Gastrocnemius medialis (tissue), 4 donors: ENCODE measurements at regions of chr16 and their contacts with region 1.

Region 1: DNA sequence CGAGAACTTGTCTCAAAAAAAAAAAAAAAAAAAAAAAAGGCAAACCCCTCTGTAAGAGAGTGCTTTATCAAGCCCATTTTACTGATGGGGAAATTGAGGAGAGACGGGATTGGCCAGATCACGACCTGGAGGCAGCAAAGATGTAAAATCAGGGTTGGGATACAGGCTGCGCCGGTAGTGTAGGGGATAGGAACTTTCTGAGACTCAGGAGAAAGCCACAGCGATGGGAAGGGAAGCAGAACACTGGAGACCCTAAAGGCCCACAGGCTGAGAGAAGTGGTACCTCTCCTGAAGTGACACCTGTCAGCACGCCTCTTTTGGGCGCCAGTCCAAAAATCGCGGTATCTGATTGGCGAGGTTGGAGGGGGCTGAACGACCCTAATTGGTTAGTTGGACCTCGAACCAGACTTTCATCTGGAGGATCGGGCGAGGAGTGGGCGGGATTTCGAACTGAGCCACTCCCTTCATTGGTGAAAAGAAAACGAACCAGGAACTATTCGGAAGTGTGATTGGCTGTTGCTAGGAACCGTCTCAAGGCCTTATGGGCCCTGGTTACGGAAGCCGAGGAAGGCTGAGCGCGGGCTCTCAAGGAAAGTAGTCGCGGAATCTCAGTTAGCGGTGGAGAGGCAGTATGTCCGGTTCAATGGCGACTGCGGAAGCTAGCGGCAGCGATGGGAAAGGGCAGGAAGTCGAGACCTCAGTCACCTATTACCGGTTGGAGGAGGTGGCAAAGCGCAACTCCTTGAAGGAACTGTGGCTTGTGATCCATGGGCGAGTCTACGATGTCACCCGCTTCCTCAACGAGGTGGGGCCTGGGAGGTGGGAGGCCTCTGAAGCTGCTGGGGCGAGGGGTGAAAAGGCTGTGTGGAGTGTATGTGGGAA is at the start of gene CYB5B:
- DNase-seq: peak; percentile 93 to 96
- ATAC-seq: peak; percentile 100
- H3K4me3 ChIP-seq: peak within 1 kb of the TSS; percentile 70 to 90 (median 79)
- H3K27ac ChIP-seq: peak within 1 kb of the TSS; percentile 76 to 88 (median 80)
- H3K4me1 ChIP-seq: peaks cover 10 to 12% of the 10 kb centered on the region in 2 donors
- H3K27me3 ChIP-seq: no peaks in the 10 kb centered on the region
- CTCF ChIP-seq: peak in 1 of 5 experiments; percentile 19
- POLR2A ChIP-seq: peak; percentile 62 to 64
- total RNA-seq, gene CYB5B: 18.5 to 50.1 (median 26.3) TPM

Region 2: GRCh38 chr16:69371564-69371963 is 52.7 kb before region 1 on chr16:
- in situ Hi-C with region 1: no loop called
- intact Hi-C with region 1: no loop called
- DNase-seq: no peak
- ATAC-seq: no peak
- H3K4me3 ChIP-seq: no peak overlapping the region
- H3K27ac ChIP-seq: no peak overlapping the region
- H3K4me1 ChIP-seq: no peaks in the 10 kb centered on the region
- H3K27me3 ChIP-seq: no peaks in the 10 kb centered on the region
- CTCF ChIP-seq: no peak
- POLR2A ChIP-seq: no peak

Region 3: DNA sequence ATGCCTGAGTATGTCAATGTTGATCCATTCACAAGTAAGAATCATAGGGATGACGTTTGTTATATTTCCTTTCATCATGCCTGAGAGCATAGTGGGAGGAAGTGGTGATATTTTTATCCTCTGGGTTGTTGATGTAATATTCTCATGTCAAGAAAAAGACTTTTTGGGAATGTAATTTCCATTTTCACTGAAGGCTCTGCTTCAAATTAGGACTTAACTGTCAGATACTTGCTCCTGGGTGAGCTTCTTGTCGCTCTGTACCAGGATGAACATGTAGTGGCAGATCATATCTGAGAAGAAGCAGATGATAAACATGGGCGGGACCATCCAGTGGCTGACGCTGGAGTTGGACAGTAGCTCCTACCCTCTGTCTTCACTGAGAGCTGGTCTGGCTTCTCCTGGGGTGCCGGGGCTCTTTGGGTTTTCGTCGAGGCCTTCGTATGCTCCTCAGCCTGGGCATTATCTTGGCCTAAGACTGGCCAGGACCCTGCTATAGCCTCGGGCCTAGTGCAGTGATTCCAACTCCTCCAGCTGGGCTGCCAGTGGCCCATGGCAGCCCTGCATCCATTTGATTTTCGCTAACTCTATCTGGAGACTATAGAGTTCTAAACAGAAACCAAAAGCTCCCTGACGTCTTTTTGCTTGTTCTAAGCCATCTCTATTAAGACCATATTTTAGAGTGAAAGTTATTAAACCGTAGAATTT is 19.8 kb after region 1 on chr16:
- in situ Hi-C with region 1: no loop called
- intact Hi-C with region 1: loop called (anchors 2 kb)
- DNase-seq: no peak
- ATAC-seq: peak; percentile 38 to 81
- H3K4me3 ChIP-seq: peak overlapping the region; percentile 35 to 44 (median 41)
- H3K27ac ChIP-seq: peak overlapping the region; percentile 70 to 81 (median 76)
- H3K4me1 ChIP-seq: peaks cover 33 to 39% of the 10 kb centered on the region in 2 donors
- H3K27me3 ChIP-seq: no peaks in the 10 kb centered on the region
- CTCF ChIP-seq: no peak
- POLR2A ChIP-seq: no peak

Region 4: DNA sequence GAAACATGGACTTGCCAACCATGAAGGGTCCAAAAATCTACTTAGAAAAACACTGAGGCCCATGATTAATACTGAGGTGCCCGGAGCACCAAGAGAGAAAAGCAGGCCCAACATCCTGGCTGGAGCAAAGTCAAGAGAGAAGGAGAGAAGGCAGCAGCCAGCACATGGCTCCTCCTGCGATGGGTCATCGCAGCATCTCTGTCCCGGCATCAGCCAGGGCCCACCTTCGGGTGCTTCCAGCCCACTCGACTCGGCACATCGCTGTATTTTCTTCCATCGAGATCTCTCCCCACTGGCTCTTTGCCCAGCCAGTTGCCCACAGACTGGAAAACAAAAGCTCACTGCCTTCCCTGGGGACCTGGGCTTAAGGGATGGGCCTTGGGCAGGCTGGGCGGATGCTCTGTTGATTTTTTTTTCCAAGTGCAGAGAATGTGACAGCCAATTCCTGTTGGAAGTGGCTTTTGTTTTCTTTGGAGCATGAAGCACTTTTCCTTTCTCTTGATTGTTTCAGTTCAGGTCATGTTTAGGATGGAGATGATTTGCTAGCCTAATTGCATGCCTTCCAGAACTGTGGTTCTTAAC is 58.2 kb after region 1 on chr16:
- in situ Hi-C with region 1: no loop called
- intact Hi-C with region 1: loop called (anchors 1 kb)
- DNase-seq: peak; percentile 20 to 40
- ATAC-seq: peak; percentile 62 to 77
- H3K4me3 ChIP-seq: peak overlapping the region; percentile 19 to 44 (median 37)
- H3K27ac ChIP-seq: peak overlapping the region; percentile 76 to 89 (median 84)
- H3K4me1 ChIP-seq: peaks cover 17% of the 10 kb centered on the region in 2 donors
- H3K27me3 ChIP-seq: no peaks in the 10 kb centered on the region
- CTCF ChIP-seq: no peak
- POLR2A ChIP-seq: no peak

Region 5: DNA sequence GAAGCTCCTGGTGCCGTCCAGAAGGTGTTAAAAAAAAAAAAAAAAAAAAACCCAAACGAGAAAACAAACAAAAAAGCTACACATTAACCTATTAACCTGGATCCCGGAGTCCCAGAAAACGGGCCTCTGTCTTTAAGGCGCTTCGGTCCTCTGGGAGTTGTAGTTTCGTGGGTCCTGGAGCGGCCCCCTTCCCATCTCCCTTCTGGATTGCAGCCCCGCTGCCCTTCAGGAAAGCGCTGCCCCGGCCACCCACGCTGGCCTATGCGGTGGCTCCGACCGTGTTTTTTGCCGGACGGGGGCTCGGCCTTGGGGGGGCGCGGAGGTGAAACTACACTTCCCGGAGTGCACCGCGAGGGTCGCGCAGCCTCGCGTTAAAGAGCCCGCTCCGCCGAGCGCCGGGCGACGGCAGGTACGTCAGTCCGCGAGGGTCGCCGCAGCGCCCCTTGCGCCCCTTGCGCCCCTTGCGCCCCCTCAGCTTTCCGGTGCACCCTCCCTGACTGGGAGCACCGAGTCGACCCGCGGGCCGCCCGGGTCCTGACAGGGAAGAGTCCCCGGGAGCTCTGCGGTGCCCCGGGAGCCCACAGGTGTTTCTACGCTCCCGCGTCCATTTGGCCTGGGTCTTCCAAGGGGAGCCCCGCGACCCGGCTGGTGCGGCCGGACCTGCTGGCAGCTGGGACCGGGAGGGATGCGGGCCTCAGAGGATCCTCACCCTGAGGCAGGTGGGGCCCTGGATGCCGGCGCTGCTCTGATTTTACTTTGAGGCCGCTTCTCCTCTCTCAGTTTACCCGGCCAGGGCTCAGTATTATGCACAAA is 1030.1 kb after region 1 on chr16 and contains the start of gene FCSK:
- in situ Hi-C with region 1: no loop called
- intact Hi-C with region 1: no loop called
- DNase-seq: peak; percentile 18 to 61
- ATAC-seq: peak; percentile 91 to 96
- H3K4me3 ChIP-seq: peak within 1 kb of the TSS; percentile 62 to 98 (median 86)
- H3K27ac ChIP-seq: peak within 1 kb of the TSS; percentile 92 to 100 (median 96)
- H3K4me1 ChIP-seq: peaks cover 12 to 20% of the 10 kb centered on the region in 2 donors
- H3K27me3 ChIP-seq: no peaks in the 10 kb centered on the region
- CTCF ChIP-seq: peak in 1 of 5 experiments; percentile 11
- POLR2A ChIP-seq: peak; percentile 57 to 62
- total RNA-seq, gene FCSK: 8.0 to 13.5 (median 11.1) TPM